Spleen (tissue), 13 donors: ENCODE measurements at regions of chr7 and their contacts with region 1.

Region 1: GRCh38 chr7:151658778-151659177 is 139.1 kb upstream of the RHEB start:
- DNase-seq: no peak
- H3K4me3 ChIP-seq: no peak overlapping the region
- H3K27ac ChIP-seq: no peak overlapping the region
- H3K4me1 ChIP-seq: no peaks in the 10 kb centered on the region
- H3K27me3 ChIP-seq: no peaks in the 10 kb centered on the region
- CTCF ChIP-seq: no peak
- POLR2A ChIP-seq: no peak

Region 2: GRCh38 chr7:151599401-151600227 is 59.2 kb before region 1 on chr7:
- intact Hi-C with region 1: loop called (anchors 10 kb)
- DNase-seq: no peak
- H3K4me3 ChIP-seq: no peak overlapping the region
- H3K27ac ChIP-seq: peak overlapping the region in 7 of 8 donors; percentile 60 to 80 (median 68)
- H3K4me1 ChIP-seq: peaks cover 4 to 30% (median 15%) of the 10 kb centered on the region in 6 donors
- H3K27me3 ChIP-seq: no peaks in the 10 kb centered on the region
- CTCF ChIP-seq: no peak
- POLR2A ChIP-seq: no peak